Mucosa of descending colon (tissue), 3 donors: ENCODE measurements at regions of chr14 and their contacts with region 1.

Region 1: DNA sequence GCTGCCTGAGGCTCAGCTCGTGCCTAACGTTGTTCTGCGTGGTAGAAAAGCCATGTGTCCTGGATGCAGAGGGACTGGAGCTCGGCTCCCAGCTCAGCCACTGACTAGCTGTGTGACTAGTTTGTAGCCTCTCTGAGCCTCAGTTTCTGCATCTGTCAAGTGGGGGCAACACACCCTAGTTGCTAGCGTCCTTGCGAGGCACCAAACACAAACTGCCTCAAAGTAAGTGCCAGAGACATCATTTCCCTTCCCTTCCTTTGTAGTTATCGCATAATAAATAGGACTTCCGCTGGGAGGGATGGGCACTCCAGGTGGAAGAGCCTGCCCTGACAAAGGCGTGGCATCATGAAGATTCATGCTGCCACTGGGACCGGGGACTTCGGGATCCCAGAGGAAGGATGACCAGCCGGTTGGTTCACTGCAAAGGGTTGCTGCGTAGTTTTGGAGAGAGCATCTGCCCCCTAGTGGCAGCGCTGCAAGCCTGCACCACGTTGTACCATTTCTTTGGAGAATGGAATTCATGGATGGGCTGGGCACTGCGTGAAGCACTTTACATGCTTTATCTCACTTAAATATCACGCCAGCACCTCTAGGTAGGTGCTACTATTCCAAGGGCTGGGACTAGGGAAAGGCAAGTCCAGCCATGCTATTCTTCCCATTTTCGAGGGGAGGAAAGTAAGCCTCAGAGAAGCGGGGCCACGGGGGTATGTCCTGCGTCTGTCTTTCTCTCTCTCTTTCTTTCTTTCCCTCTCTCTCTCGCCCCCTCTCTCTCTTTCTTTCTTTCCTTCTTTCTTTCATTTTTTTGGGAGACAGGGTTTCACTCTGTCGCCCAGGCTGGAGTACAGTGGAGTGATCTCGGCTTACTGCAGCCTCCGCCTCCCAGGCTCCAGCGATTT is 4.6 kb downstream of the CCDC197 start:
- DNase-seq: peak in 2 of 3 donors; percentile 48 to 68
- ATAC-seq: peak; percentile 79
- H3K4me3 ChIP-seq: no peak overlapping the region
- H3K4me1 ChIP-seq: peaks cover 3% of the 10 kb centered on the region
- CTCF ChIP-seq: peak; percentile 97

Region 2: GRCh38 chr14:93939304-93940229 is 62.2 kb before region 1 on chr14:
- intact Hi-C with region 1: loop called (anchors 2 kb)
- DNase-seq: peak; percentile 85 to 89 (median 89)
- ATAC-seq: peak; percentile 93
- H3K4me3 ChIP-seq: no peak overlapping the region
- H3K4me1 ChIP-seq: no peaks in the 10 kb centered on the region
- CTCF ChIP-seq: peak; percentile 67